HepG2 (cell line): ENCODE measurements at regions of chr16 and their contacts with region 1.

Region 1: GRCh38 chr16:78461496-78462191 is 362.2 kb downstream of the WWOX start:
- DNase-seq: peak; percentile 59
- ATAC-seq: peak; percentile 55
- H3K4me3 ChIP-seq: no peak overlapping the region; a peak in 1 of 6 replicates
- H3K27ac ChIP-seq: peak overlapping the region; percentile 1
- H3K4me1 ChIP-seq: peaks cover 45% of the 10 kb centered on the region
- H3K27me3 ChIP-seq: no peaks in the 10 kb centered on the region
- CTCF ChIP-seq: no peak
- EP300 ChIP-seq: no peak
- POLR2A ChIP-seq: no peak
- RAD21 ChIP-seq: no peak

Region 2: DNA sequence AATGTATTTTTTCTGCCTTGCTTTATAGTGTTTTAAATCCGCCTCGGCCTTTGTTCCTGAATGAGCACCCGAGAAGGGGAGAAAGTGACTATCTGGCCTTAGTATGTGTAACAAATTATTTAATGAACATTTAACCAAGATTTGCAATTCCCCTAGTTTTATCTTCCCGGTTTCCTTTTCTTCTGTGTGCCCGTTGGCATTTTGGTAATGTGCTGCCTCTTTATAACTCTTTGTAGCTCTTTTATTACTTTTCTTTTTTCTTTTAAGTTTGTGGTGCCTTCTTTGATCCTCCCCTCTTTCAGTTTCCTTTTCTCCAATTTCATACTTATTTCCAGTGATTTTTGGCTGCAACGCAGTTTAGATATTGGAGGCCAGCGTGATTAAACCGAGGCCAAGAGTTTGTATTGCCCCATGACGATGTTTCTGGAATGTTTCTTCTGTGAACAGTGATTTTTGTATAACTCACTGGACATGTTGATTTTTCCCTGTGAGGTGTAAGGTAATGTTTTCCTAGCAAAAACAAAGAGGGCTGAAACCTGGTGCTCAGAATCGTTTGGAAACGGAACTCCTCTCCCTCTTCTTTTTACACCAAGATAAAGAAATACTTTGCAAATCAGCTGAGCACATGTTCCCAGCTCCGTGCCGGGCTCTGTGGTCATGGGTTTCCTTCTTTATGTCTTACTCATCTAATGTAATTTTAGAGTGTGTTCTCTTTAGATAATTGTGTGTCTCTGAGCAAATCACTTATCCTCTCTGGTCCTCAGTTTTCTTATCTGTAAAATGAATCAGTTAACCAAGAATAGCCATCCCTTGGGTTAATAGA is 17.9 kb before region 1 on chr16:
- CTCF ChIA-PET with region 1: no interaction called
- POLR2A ChIA-PET with region 1: no interaction called
- in situ Hi-C with region 1: no loop called
- intact Hi-C with region 1: loop called (anchors 1 kb)
- DNase-seq: no peak
- ATAC-seq: no peak
- H3K4me3 ChIP-seq: no peak overlapping the region
- H3K27ac ChIP-seq: no peak overlapping the region
- H3K4me1 ChIP-seq: peaks cover 24% of the 10 kb centered on the region
- H3K27me3 ChIP-seq: no peaks in the 10 kb centered on the region
- CTCF ChIP-seq: no peak
- EP300 ChIP-seq: no peak
- POLR2A ChIP-seq: no peak
- RAD21 ChIP-seq: no peak

Region 3: DNA sequence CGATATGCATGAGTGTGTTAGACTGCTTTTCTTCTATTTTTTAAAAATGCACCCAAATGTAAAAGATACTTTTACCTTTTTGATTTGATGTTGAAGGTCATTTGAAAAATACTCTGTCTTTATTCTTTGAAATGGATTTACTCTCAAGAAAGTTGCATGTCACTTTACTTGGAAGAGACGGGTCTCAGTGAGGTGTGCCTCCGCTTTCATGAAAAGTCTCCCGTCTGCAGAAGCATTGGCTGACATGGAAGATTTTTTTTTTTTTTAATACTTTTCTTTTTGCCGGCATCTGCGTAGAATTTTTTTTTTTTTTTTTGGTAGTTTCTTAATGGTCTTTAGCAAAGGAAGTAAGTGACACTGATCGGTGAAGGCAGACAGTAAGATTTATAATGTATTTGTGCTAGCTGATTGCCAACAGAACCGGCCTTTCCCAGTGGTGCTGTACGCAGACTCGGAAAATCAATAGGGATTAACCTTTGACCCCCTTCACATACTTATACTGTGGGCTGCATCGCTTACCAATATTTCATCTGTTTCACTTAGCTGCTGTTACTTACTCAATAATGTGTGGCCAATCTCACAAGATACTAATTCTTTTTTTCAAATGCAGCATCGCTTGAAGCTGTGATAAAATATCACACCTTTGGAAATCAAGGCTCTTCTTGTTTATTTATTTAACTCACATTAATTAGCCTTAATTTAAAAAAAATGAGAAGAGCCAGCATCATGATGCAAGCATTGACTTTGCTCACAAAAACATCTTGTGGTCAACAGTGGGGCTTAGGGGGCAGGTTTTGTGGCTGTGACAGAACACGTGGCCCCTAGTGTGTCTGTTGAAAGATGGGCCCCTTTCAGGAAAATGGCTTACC is 21.7 kb after region 1 on chr16:
- CTCF ChIA-PET with region 1: no interaction called
- POLR2A ChIA-PET with region 1: interaction called, 8 read pairs
- in situ Hi-C with region 1: no loop called
- intact Hi-C with region 1: loop called (anchors 2 kb)
- DNase-seq: peak; percentile 93
- ATAC-seq: peak; percentile 72
- H3K4me3 ChIP-seq: no peak overlapping the region
- H3K27ac ChIP-seq: peak overlapping the region; percentile 90
- H3K4me1 ChIP-seq: peaks cover 89% of the 10 kb centered on the region
- H3K27me3 ChIP-seq: no peaks in the 10 kb centered on the region
- CTCF ChIP-seq: no peak
- EP300 ChIP-seq: peak; percentile 37 to 92; a peak in 3 of 4 replicates
- POLR2A ChIP-seq: no peak
- RAD21 ChIP-seq: no peak

Region 4: GRCh38 chr16:78619811-78620210 is 158.2 kb after region 1 on chr16:
- CTCF ChIA-PET with region 1: no interaction called
- POLR2A ChIA-PET with region 1: no interaction called
- in situ Hi-C with region 1: no loop called
- intact Hi-C with region 1: no loop called
- DNase-seq: no peak
- ATAC-seq: no peak
- H3K4me3 ChIP-seq: no peak overlapping the region
- H3K27ac ChIP-seq: no peak overlapping the region
- H3K4me1 ChIP-seq: no peaks in the 10 kb centered on the region
- H3K27me3 ChIP-seq: no peaks in the 10 kb centered on the region
- CTCF ChIP-seq: no peak
- EP300 ChIP-seq: no peak
- POLR2A ChIP-seq: no peak
- RAD21 ChIP-seq: no peak